ENCODE measurements at regions of chr17 and their contacts with region 1.

Region 1: DNA sequence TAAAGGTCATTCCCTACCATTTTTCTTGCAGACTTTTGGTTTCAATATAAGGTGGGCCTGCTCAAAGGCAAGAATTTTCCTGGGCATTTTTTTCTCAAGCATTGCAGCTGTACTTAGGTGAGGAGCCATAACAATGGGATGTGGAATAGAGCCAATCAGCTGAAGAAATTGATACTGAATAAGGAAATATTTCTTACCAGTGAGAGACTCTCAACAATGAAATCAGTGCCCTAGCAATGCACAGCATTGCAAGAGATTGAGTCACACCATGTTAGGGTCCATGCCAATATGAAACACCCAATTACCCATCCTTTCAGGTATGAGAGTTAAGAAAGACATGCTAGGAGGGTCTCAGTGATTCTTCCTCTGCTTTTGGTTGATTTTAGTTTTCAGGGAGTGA is 237.6 kb downstream of the SOX9 start:
- DNase-seq: no peak
- ATAC-seq: no peak
- H3K4me3 ChIP-seq: no peak overlapping the region
- H3K4me3 Mint-ChIP-seq: no peak overlapping the region
- H3K27ac ChIP-seq: no peak overlapping the region
- H3K27ac Mint-ChIP-seq: no peak overlapping the region
- H3K4me1 ChIP-seq: no peaks in the 10 kb centered on the region
- H3K4me1 Mint-ChIP-seq: no peaks in the 10 kb centered on the region
- H3K27me3 ChIP-seq: no peaks in the 10 kb centered on the region
- H3K27me3 Mint-ChIP-seq: peaks cover 5% of the 10 kb centered on the region
- CTCF ChIP-seq: no peak

Region 2: GRCh38 chr17:72297326-72298115 is 60.9 kb before region 1 on chr17:
- CTCF ChIA-PET with region 1: no interaction called
- POLR2A ChIA-PET with region 1: no interaction called
- intact Hi-C with region 1: loop called in 1 of 2 experiments (anchors 5 kb)
- DNase-seq: no peak
- ATAC-seq: no peak
- H3K4me3 ChIP-seq: no peak overlapping the region
- H3K4me3 Mint-ChIP-seq: no peak overlapping the region
- H3K27ac ChIP-seq: no peak overlapping the region
- H3K27ac Mint-ChIP-seq: no peak overlapping the region
- H3K4me1 ChIP-seq: no peaks in the 10 kb centered on the region
- H3K4me1 Mint-ChIP-seq: no peaks in the 10 kb centered on the region
- H3K27me3 ChIP-seq: no peaks in the 10 kb centered on the region
- H3K27me3 Mint-ChIP-seq: no peaks in the 10 kb centered on the region
- CTCF ChIP-seq: no peak

Region 3: GRCh38 chr17:72456026-72456569 is 97.6 kb after region 1 on chr17:
- CTCF ChIA-PET with region 1: no interaction called
- POLR2A ChIA-PET with region 1: no interaction called
- intact Hi-C with region 1: no loop called
- DNase-seq: no peak
- ATAC-seq: no peak
- H3K4me3 ChIP-seq: no peak overlapping the region
- H3K4me3 Mint-ChIP-seq: no peak overlapping the region
- H3K27ac ChIP-seq: no peak overlapping the region
- H3K27ac Mint-ChIP-seq: no peak overlapping the region
- H3K4me1 ChIP-seq: no peaks in the 10 kb centered on the region
- H3K4me1 Mint-ChIP-seq: no peaks in the 10 kb centered on the region
- H3K27me3 ChIP-seq: no peaks in the 10 kb centered on the region
- H3K27me3 Mint-ChIP-seq: no peaks in the 10 kb centered on the region
- CTCF ChIP-seq: no peak

Measured in CD4-positive, alpha-beta T cell (primary cell).